AG04450 (cell line): ENCODE measurements at regions of chr5 and their contacts with region 1.

Region 1: DNA sequence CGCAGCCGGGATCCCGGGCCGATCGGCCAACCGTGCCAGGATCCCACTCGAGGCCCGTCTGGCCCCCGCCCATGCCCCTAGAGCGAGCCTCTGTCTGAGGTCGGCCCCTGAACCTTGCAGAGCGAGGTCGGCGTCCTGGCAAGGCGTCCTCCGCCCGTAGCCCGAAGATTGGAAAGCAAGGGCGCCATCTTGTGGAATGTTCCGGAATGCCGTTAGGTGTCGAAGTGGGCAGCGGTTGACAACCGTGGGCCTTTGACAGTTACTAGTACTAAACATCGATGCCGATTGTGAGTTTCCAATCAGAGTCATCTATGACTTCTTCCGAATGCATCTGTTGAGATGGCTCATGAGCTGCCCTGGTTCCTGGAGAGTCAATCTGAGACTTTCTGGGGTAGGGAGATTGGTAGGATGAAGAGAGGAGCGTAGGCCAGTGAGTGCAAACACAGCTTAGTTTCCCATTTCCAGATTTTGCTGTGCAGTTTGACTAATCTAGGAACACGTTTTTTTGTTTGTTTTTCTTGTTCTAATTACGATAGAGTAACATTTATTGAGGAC is 923 bp upstream of the PLK2 start:
- DNase-seq: peak; percentile 65
- H3K4me3 ChIP-seq: peak overlapping the region; percentile 94
- H3K27ac ChIP-seq: peak overlapping the region; percentile 87
- H3K27me3 ChIP-seq: no peaks in the 10 kb centered on the region
- CTCF ChIP-seq: peak; percentile 83

Region 2: GRCh38 chr5:57184322-57184721 is 1276.5 kb before region 1 on chr5:
- CTCF ChIA-PET with region 1: no interaction called
- POLR2A ChIA-PET with region 1: interaction called, 10 read pairs
- DNase-seq: no peak
- H3K4me3 ChIP-seq: no peak overlapping the region
- H3K27ac ChIP-seq: no peak overlapping the region
- H3K27me3 ChIP-seq: no peaks in the 10 kb centered on the region
- CTCF ChIP-seq: no peak

Region 3: GRCh38 chr5:57316798-57317327 is 1143.9 kb before region 1 on chr5:
- CTCF ChIA-PET with region 1: interaction called, 10 read pairs
- POLR2A ChIA-PET with region 1: interaction called, 6 read pairs
- DNase-seq: peak; percentile 99
- H3K4me3 ChIP-seq: peak overlapping the region; percentile 18
- H3K27ac ChIP-seq: peak overlapping the region; percentile 76
- H3K27me3 ChIP-seq: no peaks in the 10 kb centered on the region
- CTCF ChIP-seq: no peak

Region 4: DNA sequence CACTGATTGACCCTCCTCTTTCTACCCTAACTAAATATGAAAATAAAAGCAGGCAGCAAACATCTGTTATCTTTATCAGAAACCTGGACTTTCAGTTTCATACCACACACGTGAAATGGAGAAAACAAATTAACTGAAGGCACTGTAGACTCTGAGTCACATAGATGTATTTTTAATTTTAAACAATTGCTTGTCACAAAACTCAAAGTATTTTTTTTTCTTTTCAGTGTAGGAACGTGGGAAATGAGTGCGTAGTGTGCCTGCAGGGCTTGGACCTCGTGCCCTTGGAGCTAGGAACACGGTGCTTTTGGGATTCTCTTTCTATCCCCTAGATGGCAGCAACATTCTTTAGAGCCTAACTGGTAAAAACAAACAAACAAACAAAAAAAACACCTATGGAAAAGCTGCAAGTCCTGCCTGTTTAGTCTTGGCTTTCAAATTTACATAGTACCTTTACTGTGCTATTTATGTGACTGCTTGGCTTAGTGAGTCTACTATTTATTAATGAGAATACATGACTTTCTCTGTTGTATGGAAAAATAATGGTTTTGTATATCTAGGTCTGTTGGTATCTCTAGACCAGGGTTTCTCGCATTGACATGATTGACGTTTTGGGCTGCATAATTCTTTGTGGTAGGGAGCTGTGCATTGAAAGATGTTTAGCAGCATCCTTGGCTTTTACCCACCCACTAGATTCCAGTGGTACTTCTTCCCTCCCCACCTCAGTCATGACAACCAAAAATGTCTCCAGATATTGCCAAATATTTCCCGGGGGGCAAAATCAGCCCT is 961.4 kb before region 1 on chr5:
- CTCF ChIA-PET with region 1: interaction called, 24 read pairs
- POLR2A ChIA-PET with region 1: interaction called, 4 read pairs
- DNase-seq: no peak
- H3K4me3 ChIP-seq: no peak overlapping the region
- H3K27ac ChIP-seq: no peak overlapping the region
- H3K27me3 ChIP-seq: no peaks in the 10 kb centered on the region
- CTCF ChIP-seq: peak; percentile 77

Region 5: GRCh38 chr5:57887851-57888621 is 572.8 kb before region 1 on chr5:
- CTCF ChIA-PET with region 1: interaction called, 28 read pairs
- POLR2A ChIA-PET with region 1: interaction called, 13 read pairs
- DNase-seq: peak; percentile 24
- H3K4me3 ChIP-seq: no peak overlapping the region
- H3K27ac ChIP-seq: no peak overlapping the region
- H3K27me3 ChIP-seq: no peaks in the 10 kb centered on the region
- CTCF ChIP-seq: peak; percentile 81